ENCODE measurements at regions of chr2 and their contacts with region 1.

Region 1: GRCh38 chr2:219402665-219403515 is 15.2 kb upstream of the DNPEP start:
- DNase-seq: peak; percentile 62 to 84
- ATAC-seq: peak; percentile 52 to 80; a peak in 5 of 6 replicates
- H3K4me3 ChIP-seq: no peak overlapping the region
- H3K27ac ChIP-seq: no peak overlapping the region
- H3K4me1 ChIP-seq: peaks cover 39% of the 10 kb centered on the region
- CTCF ChIP-seq: peak; percentile 87
- EP300 ChIP-seq: no peak
- POLR2A ChIP-seq: no peak
- RAD21 ChIP-seq: peak; percentile 85 to 90

Region 2: GRCh38 chr2:219418155-219418569 is 15.3 kb after region 1 on chr2 and contains the start of gene DES:
- CTCF ChIA-PET with region 1: interaction called, 38 read pairs
- POLR2A ChIA-PET with region 1: no interaction called
- DNase-seq: no peak
- ATAC-seq: no peak
- H3K4me3 ChIP-seq: no peak within 1 kb of the TSS
- H3K27ac ChIP-seq: no peak within 1 kb of the TSS
- H3K4me1 ChIP-seq: no peaks in the 10 kb centered on the region
- CTCF ChIP-seq: no peak
- EP300 ChIP-seq: no peak
- POLR2A ChIP-seq: no peak
- RAD21 ChIP-seq: no peak
- polyA plus RNA-seq, gene DES: 0.06 and 0.20 TPM in 2 replicates

Region 3: DNA sequence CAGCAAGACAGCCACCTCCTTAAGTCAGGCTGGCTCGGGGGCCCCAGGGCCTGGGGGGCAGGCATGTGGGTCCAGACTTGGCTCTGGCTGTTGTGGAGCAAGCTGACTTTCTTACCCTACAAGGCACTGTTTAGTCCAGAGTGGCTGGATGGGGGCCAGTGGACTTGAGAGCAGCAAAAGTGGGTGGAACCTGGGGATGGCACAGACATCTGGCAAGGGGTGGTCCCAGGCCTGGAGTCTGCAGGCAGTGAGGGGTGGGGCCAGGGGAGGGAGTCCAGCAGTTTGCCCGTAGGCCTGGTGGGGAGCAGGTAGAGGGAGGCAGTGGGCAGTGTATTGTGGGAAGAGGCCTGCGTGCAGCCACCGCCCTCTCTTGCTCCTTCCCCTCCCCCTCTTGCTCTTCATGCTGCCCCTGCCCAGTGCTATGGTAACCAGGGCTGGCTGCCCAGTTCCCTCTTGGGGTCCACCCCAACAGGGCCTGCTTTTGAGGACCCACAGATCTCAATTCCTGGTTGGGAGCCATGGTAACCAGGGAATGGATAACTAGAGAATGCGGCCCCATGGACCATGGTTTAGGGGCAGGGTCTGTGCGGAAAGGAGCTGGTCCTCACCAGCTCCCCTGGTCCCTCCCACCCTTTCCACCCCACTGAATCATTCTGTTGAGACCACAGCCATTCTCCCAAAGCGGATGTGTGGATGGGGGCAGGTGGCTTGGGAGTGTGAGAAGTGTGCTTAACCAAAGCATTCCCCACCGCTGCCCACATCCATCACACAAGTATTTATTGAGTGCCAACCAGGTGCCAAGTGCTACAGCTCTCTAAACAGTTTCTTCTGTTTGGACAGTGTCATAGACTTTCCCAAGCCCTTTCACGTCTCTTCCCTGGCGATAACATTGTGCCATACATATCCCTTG is 51.0 kb after region 1 on chr2:
- CTCF ChIA-PET with region 1: interaction called, 30 read pairs
- POLR2A ChIA-PET with region 1: no interaction called
- DNase-seq: no peak
- ATAC-seq: peak in 1 of 2 experiments; percentile 13; a peak in 3 of 6 replicates
- H3K4me3 ChIP-seq: no peak overlapping the region
- H3K27ac ChIP-seq: peak overlapping the region; percentile 75 to 83
- H3K4me1 ChIP-seq: peaks cover 27% of the 10 kb centered on the region
- CTCF ChIP-seq: no peak
- EP300 ChIP-seq: no peak
- POLR2A ChIP-seq: no peak
- RAD21 ChIP-seq: no peak

Region 4: GRCh38 chr2:219475697-219476651 is 73.1 kb after region 1 on chr2:
- CTCF ChIA-PET with region 1: interaction called, 15 read pairs
- POLR2A ChIA-PET with region 1: no interaction called
- DNase-seq: peak; percentile 63 to 74
- ATAC-seq: peak; percentile 81 to 93
- H3K4me3 ChIP-seq: peak overlapping the region; percentile 3; the same call in 2 of the 3 replicates
- H3K27ac ChIP-seq: peak overlapping the region in 1 of 2 experiments; percentile 59; a peak in 3 of 6 replicates
- H3K4me1 ChIP-seq: peaks cover 5% of the 10 kb centered on the region; the same call in 2 of the 3 replicates
- CTCF ChIP-seq: peak; percentile 84
- EP300 ChIP-seq: no peak
- POLR2A ChIP-seq: no peak
- RAD21 ChIP-seq: peak; percentile 79 to 84

Region 5: DNA sequence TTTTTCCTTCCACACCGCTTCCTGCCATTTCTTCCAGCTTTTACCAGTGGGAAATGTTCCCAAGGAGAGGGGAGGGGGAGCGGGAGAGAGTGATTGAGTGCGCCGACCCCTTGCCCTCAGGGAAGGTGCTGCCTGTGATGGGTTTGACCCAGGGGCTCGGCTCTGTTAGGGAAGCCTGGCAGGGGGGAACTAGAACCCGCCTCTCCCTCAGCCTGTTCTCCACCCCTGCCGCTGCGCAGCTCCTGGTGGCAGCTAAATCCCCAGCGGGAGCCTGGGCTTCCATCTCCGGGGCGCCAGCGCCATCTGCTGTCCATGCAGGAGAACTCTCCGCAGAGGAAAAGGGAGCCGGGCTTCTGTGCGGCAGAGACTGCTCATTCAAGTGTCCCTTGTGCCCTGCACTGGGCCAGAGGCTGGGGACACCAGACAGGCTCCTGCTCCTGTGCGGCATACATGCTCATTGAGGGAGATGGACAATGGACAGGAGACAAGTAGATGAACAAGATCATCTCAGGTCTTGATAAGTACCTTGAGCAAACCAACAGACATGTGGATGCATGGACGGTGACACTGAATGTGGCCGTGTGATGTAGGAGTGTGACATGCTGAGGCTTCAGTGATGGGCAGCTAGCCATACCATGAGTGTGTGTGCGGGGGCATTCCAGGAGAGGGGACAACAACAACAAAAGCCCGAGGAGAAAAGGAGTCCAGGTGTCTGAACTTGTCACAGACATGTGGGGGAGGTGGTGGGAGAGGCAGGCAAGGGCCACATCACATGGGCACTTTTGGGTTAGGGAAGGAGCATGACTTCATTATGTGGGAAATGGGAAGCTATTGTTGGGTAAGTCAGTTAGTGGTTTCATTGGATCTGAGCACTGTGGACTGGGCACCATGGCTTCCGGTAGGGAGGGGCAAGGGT is 127.4 kb after region 1 on chr2:
- CTCF ChIA-PET with region 1: interaction called, 362 read pairs
- POLR2A ChIA-PET with region 1: interaction called, 4 read pairs
- DNase-seq: peak; percentile 81 to 94
- ATAC-seq: peak; percentile 71 to 93
- H3K4me3 ChIP-seq: peak overlapping the region; percentile 33; the same call in 2 of the 3 replicates
- H3K27ac ChIP-seq: peak overlapping the region in 1 of 2 experiments; percentile 57; a peak in 1 of 6 replicates
- H3K4me1 ChIP-seq: peaks cover 4% of the 10 kb centered on the region; the same call in 1 of the 3 replicates
- CTCF ChIP-seq: peak; percentile 94
- EP300 ChIP-seq: no peak
- POLR2A ChIP-seq: no peak
- RAD21 ChIP-seq: peak; percentile 99

Region 6: GRCh38 chr2:219689676-219690628 is 287.1 kb after region 1 on chr2:
- CTCF ChIA-PET with region 1: interaction called, 11 read pairs
- POLR2A ChIA-PET with region 1: no interaction called
- DNase-seq: peak; percentile 57 to 58
- ATAC-seq: peak; percentile 61 to 85; a peak in 4 of 6 replicates
- H3K4me3 ChIP-seq: no peak overlapping the region
- H3K27ac ChIP-seq: no peak overlapping the region
- H3K4me1 ChIP-seq: no peaks in the 10 kb centered on the region
- CTCF ChIP-seq: peak; percentile 81
- EP300 ChIP-seq: no peak
- POLR2A ChIP-seq: no peak
- RAD21 ChIP-seq: peak; percentile 70 to 73